Esophagus muscularis mucosa (tissue), 4 donors: ENCODE measurements at regions of chr4 and their contacts with region 1.

Region 1: GRCh38 chr4:3292571-3293400 is at the start of gene RGS12:
- DNase-seq: peak; percentile 99
- H3K4me3 ChIP-seq: peak within 1 kb of the TSS; percentile 73 to 92 (median 81)
- H3K27ac ChIP-seq: peak within 1 kb of the TSS; percentile 92 to 99 (median 98)
- H3K4me1 ChIP-seq: peaks cover 27 to 47% (median 42%) of the 10 kb centered on the region in 4 donors
- H3K27me3 ChIP-seq: no peaks in the 10 kb centered on the region
- CTCF ChIP-seq: no peak
- EP300 ChIP-seq: no peak
- POLR2A ChIP-seq: peak; percentile 90
- total RNA-seq, gene RGS12: 16.2 to 23.0 (median 19.2) TPM

Region 2: GRCh38 chr4:3201718-3202702 is 90.8 kb before region 1 on chr4:
- intact Hi-C with region 1: loop called (anchors 5 kb)
- DNase-seq: no peak
- H3K4me3 ChIP-seq: no peak overlapping the region
- H3K27ac ChIP-seq: peak overlapping the region; percentile 68 to 86 (median 75)
- H3K4me1 ChIP-seq: peaks cover 14 to 64% (median 49%) of the 10 kb centered on the region in 4 donors
- H3K27me3 ChIP-seq: no peaks in the 10 kb centered on the region
- CTCF ChIP-seq: no peak
- EP300 ChIP-seq: no peak
- POLR2A ChIP-seq: no peak

Region 3: DNA sequence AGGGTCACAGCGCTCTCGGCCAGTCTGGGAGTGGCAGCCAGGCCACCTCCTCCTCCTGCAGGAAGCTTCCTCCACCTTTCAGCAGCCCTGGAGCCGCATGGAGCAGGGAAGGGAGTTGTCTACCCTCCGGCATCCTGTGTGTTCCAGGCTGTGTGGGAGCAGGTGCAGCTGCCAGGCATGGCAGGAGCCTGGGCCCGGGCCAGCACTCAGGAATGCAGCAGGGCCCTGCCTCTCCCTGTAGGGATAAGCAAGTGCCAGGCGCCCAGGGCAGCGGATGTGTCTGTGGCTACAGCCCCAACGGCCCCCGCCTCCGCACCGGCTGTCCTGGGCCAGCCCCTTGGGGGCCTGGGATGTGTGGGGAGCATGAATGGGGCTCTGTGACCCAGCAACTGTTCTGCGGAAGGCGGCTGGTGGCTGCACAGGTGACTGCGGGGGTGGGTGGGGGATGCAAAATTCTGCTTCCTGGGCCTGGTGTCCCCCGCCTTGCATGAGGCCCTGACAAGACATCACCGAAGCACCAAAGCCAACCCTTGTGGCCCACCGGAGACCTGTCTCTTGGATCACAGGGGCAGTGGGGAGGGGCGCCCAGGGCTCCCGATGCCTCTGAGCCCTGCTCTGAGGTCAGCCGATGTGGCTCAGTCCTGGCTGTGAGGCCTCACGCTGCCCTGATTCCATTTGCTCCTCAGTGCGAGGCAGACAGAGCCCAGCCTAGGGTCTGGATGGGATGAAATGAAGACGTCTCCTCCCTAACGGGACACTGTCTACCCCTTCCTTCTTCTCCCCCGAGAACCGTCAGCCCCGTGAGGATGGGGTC is 168.9 kb after region 1 on chr4:
- intact Hi-C with region 1: no loop called
- DNase-seq: no peak
- H3K4me3 ChIP-seq: no peak overlapping the region
- H3K27ac ChIP-seq: no peak overlapping the region
- H3K4me1 ChIP-seq: peaks cover 17 to 31% (median 29%) of the 10 kb centered on the region in 4 donors
- H3K27me3 ChIP-seq: peaks cover 0 to 42% (median 0%) of the 10 kb centered on the region in 4 donors
- CTCF ChIP-seq: no peak
- EP300 ChIP-seq: no peak
- POLR2A ChIP-seq: no peak